Heart right ventricle (tissue), 16 donors: ENCODE measurements at regions of chr5 and their contacts with region 1.

Region 1: GRCh38 chr5:159209438-159210305 is at the start of gene RNF145:
- DNase-seq: peak; percentile 87 to 89
- ATAC-seq: peak; percentile 77 to 91 (median 86)
- H3K4me3 ChIP-seq: peak within 1 kb of the TSS; percentile 83 to 96 (median 90)
- H3K27ac ChIP-seq: peak within 1 kb of the TSS; percentile 85 to 100 (median 95)
- H3K4me1 ChIP-seq: peaks cover 0 to 58% (median 33%) of the 10 kb centered on the region in 9 donors
- H3K27me3 ChIP-seq: no peaks in the 10 kb centered on the region
- CTCF ChIP-seq: no peak
- total RNA-seq, gene RNF145: 16.2 to 37.4 (median 22.2) TPM

Region 2: GRCh38 chr5:159156426-159157238 is 53.0 kb before region 1 on chr5:
- intact Hi-C with region 1: loop called in 6 of 10 experiments (anchors 1 to 10 kb)
- DNase-seq: peak in 1 of 2 donors; percentile 61
- ATAC-seq: peak; percentile 64 to 89 (median 82)
- H3K4me3 ChIP-seq: no peak overlapping the region
- H3K27ac ChIP-seq: no peak overlapping the region
- H3K4me1 ChIP-seq: peaks cover 0 to 10% (median 5%) of the 10 kb centered on the region in 9 donors
- H3K27me3 ChIP-seq: no peaks in the 10 kb centered on the region
- CTCF ChIP-seq: peak; percentile 83 to 92 (median 87)

Region 3: DNA sequence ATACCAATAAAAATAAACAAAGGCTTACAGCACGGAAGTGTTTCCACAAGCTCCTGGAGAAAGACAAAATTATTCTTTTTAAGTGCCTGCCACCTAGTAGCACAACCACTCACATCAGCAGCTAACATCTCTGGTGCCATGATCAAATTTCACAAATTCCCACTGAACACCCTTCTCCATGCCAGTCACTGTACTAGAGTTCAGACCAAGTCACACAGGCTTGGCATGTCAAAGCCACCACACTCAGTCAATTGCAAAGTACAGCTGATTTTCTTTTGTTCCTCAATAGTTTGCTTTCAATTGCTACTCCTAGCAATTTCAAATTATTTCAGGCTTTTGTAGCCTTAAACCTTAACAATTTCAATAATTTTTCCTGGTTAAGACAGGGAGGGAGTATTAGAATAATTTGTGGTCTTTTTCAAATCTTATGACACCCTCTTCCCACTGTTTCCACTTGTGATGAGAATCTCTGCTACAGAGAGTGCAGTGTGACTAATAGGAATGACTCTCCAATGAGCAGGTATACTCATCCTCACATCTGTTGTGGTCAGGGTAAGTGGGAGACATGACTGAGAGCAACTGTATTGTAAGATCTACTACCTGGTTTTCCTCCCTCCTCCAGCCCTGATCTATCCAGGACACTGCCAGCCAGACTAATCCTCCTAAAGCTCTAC is 46.5 kb before region 1 on chr5:
- intact Hi-C with region 1: loop called in 5 of 10 experiments (anchors 5 to 10 kb)
- DNase-seq: no peak
- ATAC-seq: no peak
- H3K4me3 ChIP-seq: no peak overlapping the region
- H3K27ac ChIP-seq: no peak overlapping the region
- H3K4me1 ChIP-seq: peaks cover 0 to 10% (median 2%) of the 10 kb centered on the region in 9 donors
- H3K27me3 ChIP-seq: no peaks in the 10 kb centered on the region
- CTCF ChIP-seq: no peak

Region 4: GRCh38 chr5:159178978-159179377 is 30.7 kb before region 1 on chr5:
- intact Hi-C with region 1: loop called in 5 of 10 experiments (anchors 5 kb)
- DNase-seq: no peak
- ATAC-seq: peak in 7 of 8 donors; percentile 59 to 88 (median 62)
- H3K4me3 ChIP-seq: no peak overlapping the region
- H3K27ac ChIP-seq: peak overlapping the region in 8 of 10 donors; percentile 33 to 88 (median 54)
- H3K4me1 ChIP-seq: peaks cover 3 to 100% (median 80%) of the 10 kb centered on the region in 9 donors
- H3K27me3 ChIP-seq: no peaks in the 10 kb centered on the region
- CTCF ChIP-seq: no peak

Region 5: DNA sequence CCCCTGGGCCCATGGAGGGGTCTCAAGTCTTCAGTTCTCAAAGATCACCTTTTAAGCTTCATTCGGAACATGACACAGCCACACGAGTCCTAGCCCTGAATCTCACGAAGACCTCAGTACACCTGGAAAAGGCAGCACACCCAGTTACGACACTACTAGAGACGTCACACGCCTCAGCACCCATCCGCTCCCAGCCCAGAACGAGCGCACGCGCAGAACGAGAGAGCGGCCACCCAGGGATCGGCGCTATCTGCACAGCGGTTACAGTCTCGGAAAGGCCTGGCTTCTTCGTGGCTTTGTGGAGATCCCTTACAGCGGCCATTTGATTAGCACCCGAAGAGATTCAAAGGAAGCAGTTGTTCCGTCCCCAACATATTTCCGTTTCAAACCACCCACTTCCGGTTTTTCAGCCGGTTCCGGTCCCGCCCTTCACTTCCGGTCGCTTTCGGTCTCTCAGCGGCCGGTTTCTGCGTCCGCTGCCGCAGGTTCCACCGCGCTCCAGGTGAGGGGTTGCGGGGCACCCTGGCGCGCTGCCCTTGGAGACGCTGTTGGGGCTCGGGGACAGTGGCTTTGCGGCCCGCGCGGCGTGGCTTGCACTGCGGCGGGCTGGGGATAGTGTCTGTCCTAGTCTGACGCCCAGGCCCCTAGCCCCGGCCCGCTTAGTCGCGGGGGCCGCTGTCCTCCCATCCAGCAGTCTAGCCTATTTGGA is 53.3 kb after region 1 on chr5 and contains the start of gene UBLCP1:
- intact Hi-C with region 1: loop called in 7 of 10 experiments (anchors 1 to 5 kb)
- DNase-seq: peak; percentile 79 to 85
- ATAC-seq: peak; percentile 93 to 96 (median 95)
- H3K4me3 ChIP-seq: peak within 1 kb of the TSS; percentile 66 to 98 (median 90)
- H3K27ac ChIP-seq: peak within 1 kb of the TSS; percentile 72 to 98 (median 88)
- H3K4me1 ChIP-seq: peaks cover 4 to 25% (median 21%) of the 10 kb centered on the region in 9 donors
- H3K27me3 ChIP-seq: no peaks in the 10 kb centered on the region
- CTCF ChIP-seq: peak in 1 of 9 donors; percentile 5
- total RNA-seq, gene UBLCP1: 11.6 to 17.0 (median 13.9) TPM